AG04450 (cell line): ENCODE measurements at regions of chr9 and their contacts with region 1.

Region 1: GRCh38 chr9:33816327-33817252 is at the start of gene UBE2R2:
- DNase-seq: peak; percentile 65
- H3K4me3 ChIP-seq: peak within 1 kb of the TSS; percentile 88
- H3K27ac ChIP-seq: peak within 1 kb of the TSS; percentile 91
- H3K27me3 ChIP-seq: no peaks in the 10 kb centered on the region
- CTCF ChIP-seq: no peak
- polyA plus RNA-seq, gene UBE2R2: 38.8 and 42.2 TPM in 2 replicates

Region 2: GRCh38 chr9:33737811-33738606 is 78.6 kb before region 1 on chr9:
- CTCF ChIA-PET with region 1: interaction called, 7 read pairs
- POLR2A ChIA-PET with region 1: interaction called, 10 read pairs
- DNase-seq: peak; percentile 29
- H3K4me3 ChIP-seq: no peak overlapping the region
- H3K27ac ChIP-seq: no peak overlapping the region
- H3K27me3 ChIP-seq: no peaks in the 10 kb centered on the region
- CTCF ChIP-seq: peak; percentile 86

Region 3: DNA sequence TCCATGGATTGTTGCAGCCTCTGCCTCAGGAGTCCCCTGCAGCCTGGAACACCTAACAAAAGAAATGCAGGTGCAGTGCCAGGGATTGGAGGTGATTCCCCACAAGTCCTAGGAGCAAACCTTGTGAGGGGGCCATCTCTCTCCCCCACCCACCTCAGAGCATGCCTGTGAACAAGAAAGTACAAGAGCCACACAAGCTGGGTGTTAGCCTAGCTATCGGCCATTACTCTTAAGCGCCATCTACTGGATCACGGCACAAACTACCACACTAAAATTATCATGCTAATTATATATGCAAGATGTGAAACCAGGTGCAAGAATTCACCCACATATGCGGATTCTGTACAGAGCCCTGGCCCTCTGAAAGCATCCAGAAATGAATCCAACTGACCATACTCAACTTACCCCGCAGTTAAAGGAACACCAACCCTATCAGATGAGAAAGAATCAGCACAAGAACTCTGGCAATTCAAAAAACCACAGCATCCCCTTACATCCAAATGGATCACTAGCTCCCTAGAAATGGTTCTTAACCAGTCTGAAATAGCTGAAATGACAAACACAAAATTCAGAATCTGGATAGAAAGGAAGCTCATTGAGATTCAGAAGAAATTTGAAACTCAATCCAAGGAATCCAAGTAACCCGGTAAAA is 37.8 kb before region 1 on chr9:
- CTCF ChIA-PET with region 1: interaction called, 15 read pairs
- POLR2A ChIA-PET with region 1: interaction called, 3 read pairs
- DNase-seq: no peak
- H3K4me3 ChIP-seq: no peak overlapping the region
- H3K27ac ChIP-seq: no peak overlapping the region
- H3K27me3 ChIP-seq: no peaks in the 10 kb centered on the region
- CTCF ChIP-seq: peak; percentile 91

Region 4: GRCh38 chr9:33800886-33801285 is 15.7 kb before region 1 on chr9:
- CTCF ChIA-PET with region 1: interaction called, 11 read pairs
- POLR2A ChIA-PET with region 1: no interaction called
- DNase-seq: no peak
- H3K4me3 ChIP-seq: no peak overlapping the region
- H3K27ac ChIP-seq: no peak overlapping the region
- H3K27me3 ChIP-seq: peaks cover 6% of the 10 kb centered on the region
- CTCF ChIP-seq: no peak

Region 5: GRCh38 chr9:33852216-33852826 is 35.7 kb after region 1 on chr9:
- CTCF ChIA-PET with region 1: interaction called, 10 read pairs
- POLR2A ChIA-PET with region 1: no interaction called
- DNase-seq: no peak
- H3K4me3 ChIP-seq: no peak overlapping the region
- H3K27ac ChIP-seq: no peak overlapping the region
- H3K27me3 ChIP-seq: no peaks in the 10 kb centered on the region
- CTCF ChIP-seq: no peak

Region 6: GRCh38 chr9:33908121-33908520 is 91.5 kb after region 1 on chr9:
- CTCF ChIA-PET with region 1: interaction called, 15 read pairs
- POLR2A ChIA-PET with region 1: interaction called, 7 read pairs
- DNase-seq: no peak
- H3K4me3 ChIP-seq: no peak overlapping the region
- H3K27ac ChIP-seq: no peak overlapping the region
- H3K27me3 ChIP-seq: no peaks in the 10 kb centered on the region
- CTCF ChIP-seq: no peak

Region 7: DNA sequence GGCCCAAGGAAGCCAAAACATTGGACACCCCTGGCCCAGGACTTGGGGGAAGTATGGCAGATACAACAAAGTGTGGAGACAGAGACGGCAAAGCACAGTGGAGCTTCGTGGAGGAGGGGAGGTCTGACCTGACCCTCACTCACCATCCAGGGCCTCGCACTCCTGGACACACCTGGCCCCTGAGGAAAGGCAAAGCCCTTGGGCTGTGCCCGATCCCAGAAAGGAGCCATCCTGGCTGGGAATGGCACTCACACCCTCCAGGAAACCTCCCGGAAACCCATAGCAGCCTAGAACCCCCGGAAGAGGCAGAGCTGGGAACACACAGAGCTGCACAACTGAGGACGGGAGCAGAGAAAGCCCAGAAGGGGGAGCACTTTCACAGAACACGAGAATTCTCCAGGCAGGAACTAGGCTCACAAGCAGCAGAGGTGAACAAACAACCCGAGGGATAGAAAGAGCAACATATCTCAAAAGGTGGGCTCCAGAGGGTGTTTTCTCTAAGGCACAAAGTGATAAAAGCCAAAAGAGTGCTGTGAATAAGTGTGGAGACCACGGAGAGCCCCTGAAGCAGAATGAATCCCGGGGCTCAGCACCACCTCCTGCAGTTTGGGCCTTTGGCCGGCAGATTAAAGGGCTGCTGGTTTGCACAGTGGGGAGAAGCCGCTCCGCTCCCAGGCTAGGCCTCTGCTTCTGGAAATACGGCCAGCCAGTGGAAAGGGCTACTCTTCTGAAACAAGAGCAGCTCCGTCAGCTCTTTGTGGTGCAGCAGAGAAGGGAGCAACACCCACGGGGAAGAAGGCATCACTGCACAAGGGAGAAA is 108.6 kb after region 1 on chr9:
- CTCF ChIA-PET with region 1: interaction called, 26 read pairs
- POLR2A ChIA-PET with region 1: no interaction called
- DNase-seq: peak; percentile 16
- H3K4me3 ChIP-seq: no peak overlapping the region
- H3K27ac ChIP-seq: no peak overlapping the region
- H3K27me3 ChIP-seq: no peaks in the 10 kb centered on the region
- CTCF ChIP-seq: peak; percentile 75